Dorsolateral prefrontal cortex (tissue), 120 donors: ENCODE measurements at regions of chr18 and their contacts with region 1.

Region 1: GRCh38 chr18:30072609-30073385 is 969.7 kb downstream of the DSC3 start:
- DNase-seq: no peak
- H3K4me3 ChIP-seq: no peak overlapping the region
- H3K27ac ChIP-seq: no peak overlapping the region
- H3K27me3 ChIP-seq: no peaks in the 10 kb centered on the region
- CTCF ChIP-seq: no peak

Region 2: DNA sequence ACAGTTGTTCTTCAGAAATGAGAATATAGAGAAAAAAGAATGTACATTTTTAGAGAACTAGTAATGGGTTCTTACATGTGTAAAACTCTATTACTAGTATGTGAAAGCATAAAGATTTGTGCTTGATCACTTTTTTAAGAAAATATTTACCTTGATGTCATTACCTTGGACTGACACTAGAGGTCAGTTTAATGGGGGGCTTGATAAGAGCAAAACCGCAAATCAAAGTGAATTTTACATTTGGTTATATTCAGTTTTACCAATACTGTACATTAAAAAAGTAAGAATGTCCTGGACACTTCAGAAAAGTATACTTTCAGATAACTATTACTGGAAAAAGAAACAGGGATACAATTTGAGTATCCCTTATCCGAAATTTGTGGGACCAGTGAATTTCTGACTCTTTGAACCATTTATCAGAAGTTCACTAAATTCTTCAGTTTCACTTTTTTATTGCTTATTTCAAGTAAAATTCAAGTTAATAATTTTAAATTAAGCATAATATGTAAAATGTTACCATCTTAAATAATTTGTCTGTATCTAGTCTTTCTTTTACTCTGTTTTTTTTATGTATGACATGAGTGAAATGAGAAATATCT is 179.7 kb before region 1 on chr18:
- intact Hi-C with region 1: no loop called
- DNase-seq: no peak
- H3K4me3 ChIP-seq: no peak overlapping the region
- H3K27ac ChIP-seq: no peak overlapping the region
- H3K27me3 ChIP-seq: no peaks in the 10 kb centered on the region
- CTCF ChIP-seq: peak in 52 of 56 donors; percentile 11 to 66 (median 48)

Region 3: DNA sequence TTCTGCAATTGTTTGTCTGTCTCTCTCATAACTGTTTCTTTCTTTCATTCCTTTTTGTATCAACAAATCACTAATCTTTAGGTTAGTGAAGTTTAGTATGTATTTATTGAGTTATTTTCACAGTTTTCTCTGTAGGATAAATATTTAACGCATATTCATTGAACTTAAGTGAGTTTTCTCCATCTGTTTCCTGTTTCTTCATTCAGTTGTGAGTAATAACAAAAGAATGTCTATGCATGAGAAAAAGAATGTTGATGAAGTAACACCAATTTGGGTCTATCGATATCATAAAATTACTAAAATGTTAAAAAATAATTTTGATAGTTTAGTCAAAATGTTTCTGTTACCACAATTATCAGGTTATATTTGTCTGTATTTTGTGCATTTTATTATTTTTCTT is 21.8 kb after region 1 on chr18:
- intact Hi-C with region 1: loop called in 1 of 2 experiments (anchors 2 kb)
- DNase-seq: no peak
- H3K4me3 ChIP-seq: no peak overlapping the region
- H3K27ac ChIP-seq: no peak overlapping the region
- H3K27me3 ChIP-seq: no peaks in the 10 kb centered on the region
- CTCF ChIP-seq: no peak